ENCODE measurements at regions of chr19 and their contacts with region 1.

Region 1: GRCh38 chr19:16185123-16185767 is at the start of gene FAM32A:
- DNase-seq: peak; percentile 100
- ATAC-seq: peak; percentile 95
- H3K4me3 Mint-ChIP-seq: peak within 1 kb of the TSS; percentile 98
- H3K27ac Mint-ChIP-seq: peak within 1 kb of the TSS; percentile 97
- H3K4me1 Mint-ChIP-seq: peaks cover 39% of the 10 kb centered on the region
- H3K27me3 Mint-ChIP-seq: peaks cover 6% of the 10 kb centered on the region
- total RNA-seq, gene FAM32A: 65.8 to 69.4 TPM

Region 2: GRCh38 chr19:16070366-16070990 is 114.8 kb before region 1 on chr19:
- CTCF ChIA-PET with region 1: interaction called, 9 read pairs
- POLR2A ChIA-PET with region 1: interaction called, 10 read pairs
- DNase-seq: peak; percentile 92
- ATAC-seq: peak; percentile 95
- H3K4me3 Mint-ChIP-seq: no peak overlapping the region
- H3K27ac Mint-ChIP-seq: no peak overlapping the region
- H3K4me1 Mint-ChIP-seq: peaks cover 51% of the 10 kb centered on the region
- H3K27me3 Mint-ChIP-seq: no peaks in the 10 kb centered on the region

Region 3: DNA sequence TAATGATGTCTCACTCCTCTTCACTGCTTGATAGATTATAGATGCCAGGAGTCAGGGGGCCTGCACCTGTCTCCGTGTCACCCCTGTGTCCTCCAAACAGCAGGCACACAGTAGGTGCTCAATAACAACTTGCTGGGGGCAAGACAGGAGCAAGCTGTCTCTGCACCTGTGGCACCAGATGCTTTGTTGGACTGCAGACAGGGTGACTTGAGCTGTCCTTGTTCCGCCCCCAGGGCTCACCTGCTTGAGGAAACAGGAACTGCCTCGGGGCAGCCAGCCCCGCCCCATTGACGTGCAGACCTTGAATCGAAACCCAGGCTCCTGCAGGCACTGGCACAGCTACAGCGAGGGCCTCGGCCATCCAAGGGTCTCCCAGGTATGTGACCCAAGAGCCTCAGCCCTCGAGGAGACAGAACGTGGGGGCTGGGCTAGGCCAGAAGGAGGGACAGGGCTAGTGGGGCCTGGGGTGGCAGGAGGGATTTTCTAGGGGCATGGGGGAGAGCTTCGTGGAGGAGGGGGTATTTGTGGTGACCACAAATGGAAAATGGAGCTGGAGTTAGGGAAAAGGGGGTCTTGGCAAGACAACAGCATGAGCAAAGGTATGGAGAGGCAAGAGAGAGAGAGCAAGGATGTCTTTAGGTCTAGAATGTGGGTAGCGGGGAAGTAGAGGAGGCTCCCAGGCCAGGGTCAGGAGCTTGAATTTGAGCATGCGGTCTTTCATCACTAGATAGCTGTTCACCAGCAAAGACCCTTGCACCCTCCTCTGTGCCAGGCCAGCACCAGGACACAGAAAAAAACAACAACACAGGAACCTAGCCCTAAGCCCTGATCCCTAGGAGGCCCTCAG is 41.6 kb before region 1 on chr19 and contains the start of gene HSH2D:
- CTCF ChIA-PET with region 1: interaction called, 13 read pairs
- POLR2A ChIA-PET with region 1: interaction called, 12 read pairs
- DNase-seq: peak; percentile 94
- ATAC-seq: peak; percentile 95
- H3K4me3 Mint-ChIP-seq: peak within 1 kb of the TSS; percentile 96
- H3K27ac Mint-ChIP-seq: peak within 1 kb of the TSS; percentile 99
- H3K4me1 Mint-ChIP-seq: peaks cover 65% of the 10 kb centered on the region
- H3K27me3 Mint-ChIP-seq: no peaks in the 10 kb centered on the region
- total RNA-seq, gene HSH2D: 83.6 to 84.3 TPM

Region 4: GRCh38 chr19:16197622-16198369 is 12.6 kb after region 1 on chr19 and contains the start of gene AP1M1:
- CTCF ChIA-PET with region 1: interaction called, 29 read pairs
- POLR2A ChIA-PET with region 1: interaction called, 16 read pairs
- DNase-seq: peak; percentile 99
- ATAC-seq: peak; percentile 93
- H3K4me3 Mint-ChIP-seq: peak within 1 kb of the TSS; percentile 97
- H3K27ac Mint-ChIP-seq: peak within 1 kb of the TSS; percentile 95
- H3K4me1 Mint-ChIP-seq: peaks cover 52% of the 10 kb centered on the region
- H3K27me3 Mint-ChIP-seq: no peaks in the 10 kb centered on the region
- total RNA-seq, gene AP1M1: 184 to 186 TPM

Region 5: DNA sequence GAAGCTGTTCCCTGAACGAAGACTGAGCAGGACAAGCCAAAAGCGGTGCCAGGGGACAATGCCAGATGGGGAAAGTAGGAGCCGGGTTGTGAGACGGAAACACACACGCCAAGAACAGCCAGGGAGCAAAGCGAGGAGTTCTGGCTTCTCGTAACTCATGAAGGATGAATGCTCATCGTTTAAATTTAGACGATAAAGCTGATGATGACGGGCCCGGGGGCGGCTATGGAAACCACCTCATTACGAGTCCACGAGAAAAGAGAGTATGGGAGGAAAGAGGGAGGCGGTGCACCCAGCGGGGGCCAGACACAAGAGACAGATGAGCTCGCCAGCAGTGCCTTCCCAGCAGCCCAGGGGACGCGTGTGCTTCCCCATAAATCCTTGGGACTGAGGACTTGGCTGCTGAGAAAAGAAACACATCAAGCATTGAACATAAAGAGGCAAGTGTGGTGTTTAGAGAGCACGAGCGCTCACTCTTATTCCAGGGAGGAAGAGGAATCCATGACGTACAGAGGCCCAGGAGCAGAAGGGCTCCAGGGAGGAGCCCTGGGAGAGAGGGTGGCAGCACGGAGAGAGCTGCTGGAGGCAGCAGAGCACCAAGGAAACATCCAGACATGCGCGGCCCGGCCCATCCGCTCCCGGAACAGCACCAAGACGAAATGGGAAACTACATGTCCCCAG is 215.8 kb after region 1 on chr19:
- CTCF ChIA-PET with region 1: no interaction called
- POLR2A ChIA-PET with region 1: no interaction called
- DNase-seq: no peak
- ATAC-seq: no peak
- H3K4me3 Mint-ChIP-seq: no peak overlapping the region
- H3K27ac Mint-ChIP-seq: no peak overlapping the region
- H3K4me1 Mint-ChIP-seq: peaks cover 7% of the 10 kb centered on the region
- H3K27me3 Mint-ChIP-seq: no peaks in the 10 kb centered on the region

Measured in activated CD8-positive, alpha-beta T cell treated with anti-CD3 and anti-CD28 coated beads, Interleukin-2, amount 10 ng/mL, durations not matched to agents 7 days and 5 days (primary cell).